Psoas muscle (tissue), 8 donors: ENCODE measurements at regions of chr10 and their contacts with region 1.

Region 1: GRCh38 chr10:58414270-58415041 is 29.2 kb downstream of the TFAM start:
- DNase-seq: no peak
- ATAC-seq: peak; percentile 57 to 76 (median 61)
- H3K4me3 ChIP-seq: no peak overlapping the region
- H3K27ac ChIP-seq: no peak overlapping the region
- H3K4me1 ChIP-seq: no peaks in the 10 kb centered on the region
- H3K27me3 ChIP-seq: no peaks in the 10 kb centered on the region
- CTCF ChIP-seq: peak; percentile 32

Region 2: DNA sequence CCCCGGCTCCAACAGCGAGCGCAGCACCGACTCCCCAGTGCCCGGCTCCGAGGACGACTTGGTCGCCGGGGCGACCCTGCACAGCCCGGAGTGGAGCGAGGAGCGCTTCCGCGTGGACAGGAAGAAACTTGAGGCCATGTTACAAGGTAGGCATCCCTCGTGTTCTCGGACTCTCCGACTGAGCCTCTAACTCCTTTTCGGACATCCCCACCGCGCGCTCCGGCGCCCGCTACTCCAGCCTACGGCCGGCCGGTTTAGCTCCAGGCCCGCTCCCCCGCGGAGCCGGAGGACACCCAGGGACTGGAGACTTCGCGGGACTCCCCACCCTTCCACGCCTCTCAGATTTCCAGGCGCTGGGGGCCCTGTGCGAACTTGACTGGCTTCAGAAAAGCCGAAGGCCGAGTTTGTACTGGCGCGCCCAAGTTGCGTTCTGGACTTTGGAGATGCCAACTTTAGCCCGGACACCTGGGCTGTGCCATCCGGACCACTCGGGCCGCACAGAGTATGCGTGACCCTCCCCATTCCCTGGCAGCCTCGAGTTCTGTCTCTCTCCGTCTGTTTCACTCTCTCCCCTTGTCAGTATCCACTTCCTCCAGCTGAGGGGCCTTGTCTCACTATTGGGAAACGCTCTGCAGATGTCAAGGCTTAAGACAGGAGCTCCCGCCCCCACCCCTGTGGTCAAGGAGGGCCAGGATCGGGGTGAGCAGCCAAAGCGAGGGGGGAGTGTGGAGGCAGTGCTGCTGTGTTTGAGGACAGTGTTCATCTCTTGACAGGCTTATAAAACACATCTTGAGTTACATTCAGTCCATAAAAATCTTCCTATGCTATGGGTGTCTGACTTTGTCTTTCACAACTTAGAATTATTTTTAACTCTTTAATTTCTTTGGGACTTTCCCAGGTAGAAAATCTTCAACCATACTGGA is 99.0 kb after region 1 on chr10:
- intact Hi-C with region 1: loop called in 1 of 2 experiments (anchors 10 kb)
- DNase-seq: peak; percentile 73 to 88
- ATAC-seq: peak; percentile 67 to 84 (median 80)
- H3K4me3 ChIP-seq: peak overlapping the region; percentile 80
- H3K27ac ChIP-seq: peak overlapping the region; percentile 81
- H3K4me1 ChIP-seq: peaks cover 6% of the 10 kb centered on the region
- H3K27me3 ChIP-seq: peaks cover 0 to 10% (median 3%) of the 10 kb centered on the region in 3 donors
- CTCF ChIP-seq: no peak

Region 3: GRCh38 chr10:58588673-58589265 is 174.3 kb after region 1 on chr10:
- intact Hi-C with region 1: loop called in 1 of 2 experiments (anchors 10 kb)
- DNase-seq: peak; percentile 37 to 64
- ATAC-seq: peak; percentile 51 to 91 (median 86)
- H3K4me3 ChIP-seq: no peak overlapping the region
- H3K27ac ChIP-seq: no peak overlapping the region
- H3K4me1 ChIP-seq: no peaks in the 10 kb centered on the region
- H3K27me3 ChIP-seq: no peaks in the 10 kb centered on the region
- CTCF ChIP-seq: peak; percentile 42

Region 4: DNA sequence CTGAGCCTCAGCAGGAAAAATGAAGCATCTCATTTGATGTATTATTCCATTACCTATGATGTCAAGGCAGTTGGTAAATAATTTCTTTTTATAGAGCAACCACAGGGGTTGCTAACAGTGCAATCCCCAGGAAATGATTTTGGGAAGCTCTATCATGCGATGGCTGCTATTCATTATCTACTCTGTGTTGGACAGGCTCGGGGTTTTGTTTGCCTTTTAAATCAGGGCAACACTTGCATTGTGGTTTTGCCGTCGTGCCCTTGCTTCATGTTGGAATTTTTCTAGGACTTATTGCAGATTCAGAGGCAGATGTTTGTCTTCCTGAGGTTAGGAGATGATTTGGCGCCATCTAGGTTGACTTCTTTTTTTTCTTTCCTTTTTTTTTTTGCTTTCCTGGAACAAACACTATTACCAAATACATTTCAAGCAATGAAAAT is 226.7 kb after region 1 on chr10:
- intact Hi-C with region 1: loop called in 1 of 2 experiments (anchors 10 kb)
- DNase-seq: no peak
- ATAC-seq: peak; percentile 37 to 74 (median 56)
- H3K4me3 ChIP-seq: peak overlapping the region; percentile 6
- H3K27ac ChIP-seq: peak overlapping the region; percentile 53
- H3K4me1 ChIP-seq: peaks cover 6% of the 10 kb centered on the region
- H3K27me3 ChIP-seq: no peaks in the 10 kb centered on the region
- CTCF ChIP-seq: no peak